ENCODE measurements at regions of chr2 and their contacts with region 1.

Region 1: DNA sequence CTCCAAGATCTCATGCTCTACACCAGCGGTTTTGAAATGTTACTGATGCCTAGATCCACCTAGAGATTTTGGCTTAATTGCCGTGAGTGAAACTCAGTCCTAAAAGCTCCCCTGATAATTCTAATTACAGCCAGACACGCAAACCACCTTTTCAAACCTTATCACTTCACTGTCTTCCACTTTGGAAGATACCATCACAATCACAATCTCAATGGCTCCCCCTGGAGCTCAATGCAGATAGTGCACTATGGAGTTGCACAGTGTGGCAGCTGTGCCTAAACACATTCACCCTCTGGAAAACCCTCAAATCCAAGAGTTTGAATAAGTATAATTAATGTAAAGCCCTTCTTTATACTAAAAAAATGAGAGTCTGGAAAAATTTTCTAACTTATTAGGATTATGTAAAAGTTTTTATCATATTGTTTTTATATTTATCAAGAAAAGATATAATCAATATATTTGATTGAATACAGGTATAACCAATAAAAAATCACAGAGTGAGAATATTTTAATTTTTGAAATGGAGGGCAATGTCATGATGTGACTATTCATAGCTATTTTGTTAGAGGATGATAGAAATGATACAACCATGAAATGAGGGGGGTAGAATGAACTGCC is 102.9 kb upstream of the SLC8A1 start:
- DNase-seq: peak; percentile 48

Region 2: GRCh38 chr2:39913648-39914461 is 640.9 kb before region 1 on chr2:
- CTCF ChIA-PET with region 1: interaction called, 11 read pairs
- POLR2A ChIA-PET with region 1: no interaction called
- DNase-seq: peak; percentile 50